ENCODE measurements at regions of chr3 and their contacts with region 1.

Region 1: GRCh38 chr3:64209866-64210621 is 15.2 kb downstream of the PRICKLE2 start:
- DNase-seq: peak; percentile 40 to 90
- H3K4me3 ChIP-seq: no peak overlapping the region
- H3K27ac ChIP-seq: peak overlapping the region; percentile 78 to 79
- H3K4me1 ChIP-seq: peaks cover 0 to 37% of the 10 kb centered on the region in 2 donors
- H3K27me3 ChIP-seq: no peaks in the 10 kb centered on the region
- CTCF ChIP-seq: no peak

Region 2: DNA sequence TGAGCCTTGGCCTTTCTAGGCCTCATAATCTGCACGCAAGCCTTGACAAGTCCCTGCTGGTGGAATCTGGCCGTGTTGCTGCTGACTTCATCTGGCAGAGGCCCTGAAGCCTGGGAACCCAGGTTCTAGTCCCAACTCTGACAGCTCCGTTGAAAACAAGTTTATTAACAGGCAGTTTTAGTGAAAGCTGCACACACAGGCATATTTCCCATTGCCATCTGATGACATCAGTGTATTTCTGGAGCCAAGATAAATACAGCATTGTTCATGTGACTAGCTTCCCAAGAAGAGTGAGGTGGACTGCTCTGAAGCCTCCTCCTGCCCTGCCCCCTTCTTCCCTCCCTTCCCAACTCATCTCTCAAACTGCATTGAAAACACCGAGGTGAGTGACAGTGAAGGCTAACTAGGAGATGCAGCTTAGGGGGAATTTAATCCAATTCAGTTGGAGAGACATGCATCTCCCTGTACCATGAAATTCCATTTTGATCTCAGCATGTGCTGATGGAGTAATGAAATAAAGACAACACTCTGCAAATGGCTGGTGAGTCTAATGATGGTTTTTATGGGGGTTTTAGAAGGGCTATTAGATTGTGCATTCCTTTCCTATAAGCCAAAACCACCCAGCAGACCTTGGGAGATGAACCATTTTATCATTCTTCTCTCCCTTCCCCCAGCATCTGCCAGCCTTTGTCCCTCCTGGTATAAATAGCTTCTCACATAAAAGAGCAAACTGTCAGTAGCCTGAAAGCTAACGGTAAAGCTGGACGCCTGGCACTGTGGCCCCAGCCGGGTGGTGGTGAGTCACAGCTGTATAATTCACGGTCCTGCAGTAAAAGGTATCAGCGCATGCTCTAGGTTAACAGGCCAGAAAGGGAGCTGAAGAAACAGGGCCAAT is 22.7 kb before region 1 on chr3:
- intact Hi-C with region 1: loop called (anchors 2 kb)
- DNase-seq: peak; percentile 35 to 80
- H3K4me3 ChIP-seq: no peak overlapping the region
- H3K27ac ChIP-seq: peak overlapping the region; percentile 50 to 76
- H3K4me1 ChIP-seq: peaks cover 10 to 43% of the 10 kb centered on the region in 2 donors
- H3K27me3 ChIP-seq: no peaks in the 10 kb centered on the region
- CTCF ChIP-seq: no peak

Region 3: GRCh38 chr3:64238971-64239667 is 29.1 kb after region 1 on chr3:
- intact Hi-C with region 1: no loop called
- DNase-seq: peak in 1 of 2 donors; percentile 84
- H3K4me3 ChIP-seq: peak overlapping the region; percentile 16 to 27
- H3K27ac ChIP-seq: peak overlapping the region; percentile 19 to 48
- H3K4me1 ChIP-seq: peaks cover 3 to 13% of the 10 kb centered on the region in 2 donors
- H3K27me3 ChIP-seq: no peaks in the 10 kb centered on the region
- CTCF ChIP-seq: no peak

Measured in ascending aorta (tissue), 2 donors.